Natural killer cell (primary cell): ENCODE measurements at regions of chr22 and their contacts with region 1.

Region 1: GRCh38 chr22:41285820-41286638 is at the start of gene RANGAP1:
- DNase-seq: peak; percentile 95 to 99
- ATAC-seq: peak; percentile 93 to 98 (median 93)
- H3K4me3 ChIP-seq: peak within 1 kb of the TSS; percentile 86
- H3K4me3 Mint-ChIP-seq: peak within 1 kb of the TSS; percentile 93
- H3K27ac ChIP-seq: peak within 1 kb of the TSS; percentile 86
- H3K27ac Mint-ChIP-seq: peak within 1 kb of the TSS; percentile 96
- H3K4me1 ChIP-seq: peaks cover 15% of the 10 kb centered on the region
- H3K4me1 Mint-ChIP-seq: peaks cover 24 to 39% of the 10 kb centered on the region in 2 donors
- H3K27me3 ChIP-seq: no peaks in the 10 kb centered on the region
- H3K27me3 Mint-ChIP-seq: no peaks in the 10 kb centered on the region
- CTCF ChIP-seq: no peak
- total RNA-seq, gene RANGAP1: 44.0 to 54.2 (median 54.0) TPM

Region 2: DNA sequence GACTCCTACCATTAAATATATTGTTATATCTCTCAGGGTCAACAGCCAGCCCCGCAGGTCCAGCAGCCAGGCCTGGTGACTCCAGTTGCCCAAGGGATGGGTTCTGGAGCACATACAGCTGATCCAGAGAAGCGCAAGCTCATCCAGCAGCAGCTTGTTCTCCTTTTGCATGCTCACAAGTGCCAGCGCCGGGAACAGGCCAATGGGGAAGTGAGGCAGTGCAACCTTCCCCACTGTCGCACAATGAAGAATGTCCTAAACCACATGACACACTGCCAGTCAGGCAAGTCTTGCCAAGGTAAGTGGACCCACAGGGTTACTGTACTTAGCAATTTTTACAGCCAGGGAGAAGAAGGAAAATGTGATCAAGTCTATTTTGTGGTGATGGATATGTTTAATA is 158.6 kb before region 1 on chr22:
- intact Hi-C with region 1: no loop called
- DNase-seq: no peak
- ATAC-seq: no peak
- H3K4me3 ChIP-seq: no peak overlapping the region
- H3K4me3 Mint-ChIP-seq: no peak overlapping the region
- H3K27ac ChIP-seq: no peak overlapping the region
- H3K27ac Mint-ChIP-seq: peak overlapping the region in 1 of 2 donors; percentile 18
- H3K4me1 ChIP-seq: peaks cover 3% of the 10 kb centered on the region
- H3K4me1 Mint-ChIP-seq: peaks cover 14 to 17% of the 10 kb centered on the region in 2 donors
- H3K27me3 ChIP-seq: no peaks in the 10 kb centered on the region
- H3K27me3 Mint-ChIP-seq: no peaks in the 10 kb centered on the region
- CTCF ChIP-seq: no peak

Region 3: DNA sequence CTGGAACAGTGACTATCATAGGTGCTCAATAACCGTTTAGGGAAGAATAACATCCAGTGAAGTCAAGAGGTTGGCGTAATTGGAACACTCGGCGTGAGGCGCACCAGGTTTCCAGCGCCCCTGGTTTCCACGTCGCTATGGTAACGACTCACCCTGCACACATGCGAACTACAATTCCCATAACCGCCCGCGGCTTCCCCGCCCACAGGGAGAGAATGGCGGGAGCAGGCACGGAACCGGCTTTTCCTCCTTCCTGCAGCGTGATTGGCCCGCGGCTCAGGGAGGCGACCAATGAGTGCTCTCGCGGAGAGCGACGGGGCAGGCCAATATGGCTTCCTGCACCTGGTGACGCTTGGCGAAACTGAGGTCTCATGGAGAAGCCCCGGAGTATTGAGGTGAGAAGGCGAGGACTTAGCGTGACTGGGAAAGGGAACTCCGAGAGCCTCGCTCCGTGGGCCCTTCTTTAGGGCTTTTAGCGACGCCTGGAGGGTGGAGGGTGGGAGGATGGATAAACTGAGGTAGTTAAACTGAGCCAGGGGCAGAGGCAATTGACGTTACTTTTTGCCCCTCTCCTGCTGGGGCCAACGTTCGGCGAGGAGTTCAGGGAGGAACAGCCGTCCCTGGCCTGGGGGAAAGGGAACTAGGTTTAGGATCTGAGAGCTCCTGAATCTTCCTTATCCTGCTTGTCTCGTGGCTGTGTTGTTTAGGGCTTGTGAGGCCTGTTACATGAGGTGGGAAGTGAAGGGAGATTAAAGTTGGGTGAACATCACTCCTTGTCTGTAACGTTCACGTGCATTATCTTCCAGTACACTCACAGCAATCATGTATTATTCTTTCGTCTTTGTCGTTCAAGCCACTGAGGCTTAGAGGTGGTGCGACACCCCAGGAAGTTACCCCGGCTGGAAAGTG is 80.8 kb before region 1 on chr22 and contains the start of gene L3MBTL2:
- intact Hi-C with region 1: loop called (anchors 10 kb)
- DNase-seq: peak; percentile 94 to 99
- ATAC-seq: peak; percentile 99 to 100 (median 100)
- H3K4me3 ChIP-seq: peak within 1 kb of the TSS; percentile 73
- H3K4me3 Mint-ChIP-seq: peak within 1 kb of the TSS; percentile 97
- H3K27ac ChIP-seq: peak within 1 kb of the TSS; percentile 56
- H3K27ac Mint-ChIP-seq: peak within 1 kb of the TSS; percentile 88 to 92
- H3K4me1 ChIP-seq: peaks cover 17% of the 10 kb centered on the region
- H3K4me1 Mint-ChIP-seq: peaks cover 14 to 20% of the 10 kb centered on the region in 2 donors
- H3K27me3 ChIP-seq: no peaks in the 10 kb centered on the region
- H3K27me3 Mint-ChIP-seq: peaks cover 0 to 9% of the 10 kb centered on the region in 2 donors
- CTCF ChIP-seq: no peak
- total RNA-seq, gene L3MBTL2: 25.2 to 32.1 (median 31.7) TPM

Region 4: GRCh38 chr22:41301105-41302020 is 15.3 kb after region 1 on chr22 and contains the start of gene ZC3H7B:
- intact Hi-C with region 1: loop called (anchors 1 kb)
- DNase-seq: peak; percentile 74 to 93
- ATAC-seq: peak; percentile 98
- H3K4me3 ChIP-seq: peak within 1 kb of the TSS; percentile 97
- H3K4me3 Mint-ChIP-seq: peak within 1 kb of the TSS; percentile 84
- H3K27ac ChIP-seq: peak within 1 kb of the TSS; percentile 71
- H3K27ac Mint-ChIP-seq: peak within 1 kb of the TSS; percentile 77 to 90
- H3K4me1 ChIP-seq: peaks cover 17% of the 10 kb centered on the region
- H3K4me1 Mint-ChIP-seq: peaks cover 21 to 30% of the 10 kb centered on the region in 2 donors
- H3K27me3 ChIP-seq: no peaks in the 10 kb centered on the region
- H3K27me3 Mint-ChIP-seq: no peaks in the 10 kb centered on the region
- CTCF ChIP-seq: peak; percentile 53
- total RNA-seq, gene ZC3H7B: 33.9 to 40.3 (median 38.3) TPM

Region 5: DNA sequence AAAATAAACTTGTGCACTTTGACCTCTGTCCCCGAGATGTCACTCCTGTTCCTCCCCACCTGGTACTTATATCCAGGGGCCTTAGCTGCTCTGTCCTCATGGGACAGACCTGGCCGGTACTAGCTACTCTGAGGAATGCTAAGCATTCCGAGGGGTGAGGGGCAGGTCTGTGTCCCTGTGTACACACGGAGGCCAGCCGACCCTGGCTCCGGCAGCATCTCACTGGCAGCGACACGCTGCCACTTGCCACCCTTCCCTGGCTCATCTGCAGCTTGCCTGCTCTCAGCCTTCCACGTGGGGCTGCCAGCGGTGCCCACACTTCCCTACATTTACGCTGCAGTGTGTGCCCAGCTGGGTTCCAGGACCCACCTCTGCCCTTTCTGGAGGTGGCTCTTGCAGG is 74.1 kb after region 1 on chr22:
- intact Hi-C with region 1: no loop called
- DNase-seq: no peak
- ATAC-seq: no peak
- H3K4me3 ChIP-seq: no peak overlapping the region
- H3K4me3 Mint-ChIP-seq: no peak overlapping the region
- H3K27ac ChIP-seq: no peak overlapping the region
- H3K27ac Mint-ChIP-seq: no peak overlapping the region
- H3K4me1 ChIP-seq: no peaks in the 10 kb centered on the region
- H3K4me1 Mint-ChIP-seq: no peaks in the 10 kb centered on the region
- H3K27me3 ChIP-seq: no peaks in the 10 kb centered on the region
- H3K27me3 Mint-ChIP-seq: no peaks in the 10 kb centered on the region
- CTCF ChIP-seq: no peak

Region 6: DNA sequence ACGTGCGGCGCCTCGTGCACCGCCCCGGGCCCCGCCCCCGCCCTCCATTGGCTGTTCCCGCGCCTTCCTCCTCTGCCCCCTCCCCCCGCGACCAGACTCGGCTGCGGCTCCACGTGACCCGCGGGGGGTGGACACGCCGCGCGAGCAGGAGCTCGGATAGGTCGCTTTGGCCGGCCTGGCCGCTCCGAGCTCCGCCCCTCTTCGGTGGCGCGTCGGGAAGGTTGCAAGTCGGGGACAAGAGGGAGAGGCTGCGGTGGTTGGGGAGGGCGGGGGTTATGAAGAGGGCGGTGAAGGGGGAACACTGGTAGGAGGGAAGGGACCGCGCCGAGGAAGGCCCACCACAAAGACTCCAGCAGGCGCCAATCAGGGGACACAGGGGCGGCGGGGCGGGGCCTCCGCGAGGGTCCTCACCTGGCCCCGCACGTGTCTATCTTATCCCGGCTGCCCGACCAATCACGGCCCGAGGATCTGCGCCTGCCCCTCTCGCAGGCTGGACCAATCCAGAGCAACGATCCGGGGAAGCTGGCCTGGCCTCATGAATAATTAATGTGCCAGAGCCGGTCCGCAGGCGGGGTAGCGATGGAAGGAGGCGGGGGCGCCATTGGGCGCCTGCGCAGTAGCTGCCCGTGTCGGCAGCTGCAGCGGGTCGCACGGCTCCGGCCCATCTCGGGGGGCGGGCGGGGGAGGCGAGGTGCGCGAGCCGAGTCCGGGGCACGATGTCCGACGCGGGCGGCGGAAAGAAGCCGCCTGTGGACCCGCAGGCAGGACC is 95.5 kb after region 1 on chr22 and contains the start of gene TEF:
- intact Hi-C with region 1: loop called (anchors 1 kb)
- DNase-seq: peak; percentile 96 to 98
- ATAC-seq: peak; percentile 81 to 92 (median 84)
- H3K4me3 ChIP-seq: peak within 1 kb of the TSS; percentile 63
- H3K4me3 Mint-ChIP-seq: peak within 1 kb of the TSS; percentile 94
- H3K27ac ChIP-seq: peak within 1 kb of the TSS; percentile 94
- H3K27ac Mint-ChIP-seq: peak within 1 kb of the TSS; percentile 94 to 98
- H3K4me1 ChIP-seq: peaks cover 20% of the 10 kb centered on the region
- H3K4me1 Mint-ChIP-seq: peaks cover 0 to 13% of the 10 kb centered on the region in 2 donors
- H3K27me3 ChIP-seq: no peaks in the 10 kb centered on the region
- H3K27me3 Mint-ChIP-seq: no peaks in the 10 kb centered on the region
- CTCF ChIP-seq: no peak
- total RNA-seq, gene TEF: 2.7 to 5.5 (median 3.0) TPM

Region 7: DNA sequence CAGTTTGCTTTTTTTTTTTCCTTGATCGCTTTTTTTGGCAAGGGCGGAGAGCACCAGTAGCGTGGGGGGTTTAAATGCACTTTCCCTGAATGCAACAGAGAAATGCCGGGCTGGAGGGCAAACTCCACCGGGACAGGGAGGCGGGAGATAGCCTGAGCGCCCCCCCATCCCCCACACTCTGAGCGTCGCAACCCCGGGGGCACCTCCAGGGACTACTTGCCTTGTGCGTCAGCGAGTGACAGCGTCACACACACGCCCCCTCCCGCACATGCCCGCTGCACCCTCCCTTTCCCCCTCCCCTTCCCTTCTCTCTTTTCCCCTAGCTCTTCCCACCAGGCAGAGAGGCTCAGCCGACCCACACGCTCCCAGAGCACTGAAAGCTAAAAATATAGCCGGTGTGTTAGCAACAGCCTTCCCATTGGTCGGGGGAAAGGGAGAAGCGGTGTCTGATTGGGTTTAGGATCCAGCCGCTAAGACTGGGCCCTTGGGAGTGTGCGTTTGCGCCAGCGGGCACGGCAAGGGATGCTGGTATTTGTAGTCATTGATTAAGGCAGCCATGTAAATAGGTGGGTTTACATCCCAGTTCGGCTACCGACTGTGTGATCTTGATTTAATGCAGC is 162.3 kb after region 1 on chr22:
- intact Hi-C with region 1: loop called (anchors 1 kb)
- DNase-seq: peak; percentile 81 to 96
- ATAC-seq: peak; percentile 62 to 81 (median 70)
- H3K4me3 ChIP-seq: peak overlapping the region; percentile 91
- H3K4me3 Mint-ChIP-seq: peak overlapping the region; percentile 93
- H3K27ac ChIP-seq: peak overlapping the region; percentile 100
- H3K27ac Mint-ChIP-seq: peak overlapping the region; percentile 93 to 99
- H3K4me1 ChIP-seq: peaks cover 31% of the 10 kb centered on the region
- H3K4me1 Mint-ChIP-seq: peaks cover 30 to 41% of the 10 kb centered on the region in 2 donors
- H3K27me3 ChIP-seq: no peaks in the 10 kb centered on the region
- H3K27me3 Mint-ChIP-seq: no peaks in the 10 kb centered on the region
- CTCF ChIP-seq: no peak